BJ (cell line): ENCODE measurements at regions of chr11 and their contacts with region 1.

Region 1: DNA sequence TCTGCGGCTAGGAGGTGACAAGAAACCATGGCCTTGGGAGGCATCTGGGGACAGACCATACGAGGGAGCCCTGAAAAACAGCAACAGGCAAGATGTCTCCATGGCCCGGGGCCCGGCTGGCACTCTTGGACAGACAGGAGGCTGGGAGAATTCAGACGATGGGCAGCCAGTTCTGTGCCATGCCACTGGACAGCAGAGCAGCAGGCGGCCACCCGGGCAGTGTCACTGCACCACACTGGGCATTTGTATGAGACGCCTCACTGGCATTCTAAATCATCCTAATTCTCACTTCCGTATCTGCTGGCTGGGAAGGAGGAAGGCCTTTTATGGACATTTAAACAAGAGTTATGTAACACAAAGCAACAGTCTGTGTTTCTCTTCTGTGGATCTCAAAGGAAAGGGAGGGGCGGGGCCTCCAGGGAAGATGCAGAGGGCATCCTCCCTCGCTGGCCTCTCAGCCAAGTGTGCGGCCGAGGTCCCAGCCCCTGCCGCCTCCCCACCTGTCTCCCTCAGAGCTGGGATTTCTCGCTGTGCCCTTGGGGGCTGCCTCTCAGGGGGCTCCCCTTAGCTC is 350.3 kb downstream of the SHANK2 start:
- DNase-seq: no peak
- H3K4me3 ChIP-seq: no peak overlapping the region
- H3K27me3 ChIP-seq: no peaks in the 10 kb centered on the region
- CTCF ChIP-seq: no peak

Region 2: DNA sequence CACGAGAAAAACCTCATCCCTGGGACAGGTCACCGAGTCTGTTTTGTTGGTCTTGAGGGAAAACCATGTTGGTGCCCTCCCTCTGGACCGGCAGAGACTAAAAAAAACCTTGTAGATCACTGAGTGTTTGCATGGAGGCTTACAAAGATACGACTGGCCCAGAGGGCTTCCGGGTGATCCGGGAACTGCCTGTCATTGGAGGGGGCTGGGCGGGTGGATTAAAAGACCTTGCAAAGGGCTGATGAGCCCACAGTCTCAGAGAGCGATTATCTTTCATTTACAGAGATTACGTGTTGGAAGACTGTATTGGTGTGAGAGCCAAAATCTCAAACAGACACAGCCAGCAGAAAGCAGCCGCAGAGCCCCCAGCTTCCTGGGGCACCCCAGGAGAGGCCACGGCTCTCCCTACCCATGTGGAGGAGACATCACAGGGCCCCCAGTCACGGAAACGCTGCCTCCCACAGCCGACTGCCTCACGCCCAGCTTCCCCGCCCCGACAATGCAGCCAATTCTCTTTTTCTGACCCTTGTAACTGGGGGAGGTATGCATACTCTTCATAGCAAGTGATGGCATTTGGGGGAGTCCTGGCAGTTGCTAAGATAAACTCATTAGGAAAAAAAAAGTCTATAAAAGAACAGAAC is 77.3 kb before region 1 on chr11:
- CTCF ChIA-PET with region 1: no interaction called
- POLR2A ChIA-PET with region 1: no interaction called
- DNase-seq: no peak
- H3K4me3 ChIP-seq: no peak overlapping the region
- H3K27me3 ChIP-seq: peaks cover 21% of the 10 kb centered on the region
- CTCF ChIP-seq: no peak

Region 3: GRCh38 chr11:70885821-70886231 is 16.2 kb before region 1 on chr11:
- CTCF ChIA-PET with region 1: no interaction called
- POLR2A ChIA-PET with region 1: interaction called, 11 read pairs
- DNase-seq: no peak
- H3K4me3 ChIP-seq: no peak overlapping the region
- H3K27me3 ChIP-seq: no peaks in the 10 kb centered on the region
- CTCF ChIP-seq: no peak

Region 4: DNA sequence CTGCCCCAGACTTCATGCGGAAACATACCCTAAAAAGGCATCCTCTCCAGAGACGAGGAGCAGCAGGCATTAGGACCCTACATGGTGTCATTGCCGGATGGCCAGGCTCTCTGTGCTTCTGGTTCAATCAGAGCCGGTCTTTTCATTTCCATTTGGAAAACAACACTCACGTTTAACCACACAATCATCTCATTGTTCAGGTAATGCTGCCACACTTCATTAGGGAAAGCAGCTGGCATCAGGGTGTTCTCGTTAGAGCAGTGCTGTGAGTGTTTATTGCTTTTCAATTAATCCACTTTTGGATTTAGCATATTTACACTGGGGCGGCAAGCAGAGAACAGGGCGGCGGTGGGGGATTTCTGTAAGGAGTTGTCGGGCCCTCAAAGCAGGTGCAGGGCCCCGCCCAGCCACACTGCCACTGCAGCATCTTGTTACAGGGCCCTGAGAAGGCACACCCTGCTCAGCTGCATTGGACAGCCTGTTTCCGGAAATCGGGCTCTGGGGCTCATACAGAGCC is 11.7 kb after region 1 on chr11:
- CTCF ChIA-PET with region 1: no interaction called
- POLR2A ChIA-PET with region 1: no interaction called
- DNase-seq: no peak
- H3K4me3 ChIP-seq: no peak overlapping the region
- H3K27me3 ChIP-seq: no peaks in the 10 kb centered on the region
- CTCF ChIP-seq: no peak